Right ventricle myocardium inferior (tissue), 1 donor: ENCODE measurements at regions of chr16 and their contacts with region 1.

Region 1: DNA sequence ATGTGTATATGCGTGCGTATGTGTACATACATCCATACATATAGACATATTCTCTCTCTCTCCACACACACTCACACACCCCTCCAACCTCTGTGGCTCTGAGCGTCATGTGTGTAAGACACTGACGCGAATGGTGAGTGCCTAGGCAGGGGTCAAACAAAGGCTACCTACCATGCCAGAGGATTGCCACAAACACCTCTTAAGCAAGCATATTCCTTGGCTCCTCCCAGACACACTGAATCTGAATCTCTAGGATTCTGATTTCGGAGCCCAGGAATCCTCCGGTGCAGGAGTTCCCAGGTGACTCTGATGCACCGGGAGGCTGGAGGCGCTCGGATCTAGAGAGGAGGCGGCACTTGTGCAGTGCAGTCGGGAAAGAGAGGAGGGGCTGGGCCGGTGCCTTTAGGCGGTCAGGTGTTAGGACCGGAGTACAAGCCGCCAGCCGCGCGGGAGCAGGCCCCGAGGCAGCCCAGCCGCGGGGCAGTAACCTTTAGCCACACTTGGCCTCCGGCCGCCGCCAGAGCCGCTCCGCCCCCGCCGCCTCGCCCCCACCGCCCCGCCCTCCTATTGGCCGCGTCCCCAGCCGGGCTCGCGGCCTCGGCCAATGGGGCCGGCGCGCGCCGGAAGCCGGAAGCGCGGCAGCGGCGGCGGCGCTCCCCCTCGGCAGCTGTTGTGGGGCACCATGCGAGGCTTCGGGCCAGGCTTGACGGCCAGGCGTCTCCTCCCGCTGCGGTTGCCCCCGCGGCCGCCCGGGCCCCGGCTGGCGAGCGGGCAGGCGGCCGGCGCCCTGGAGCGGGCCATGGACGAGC is at the start of gene MLYCD:
- DNase-seq: peak; percentile 92
- ATAC-seq: peak; percentile 90
- total RNA-seq, gene MLYCD: 48.2 TPM

Region 2: DNA sequence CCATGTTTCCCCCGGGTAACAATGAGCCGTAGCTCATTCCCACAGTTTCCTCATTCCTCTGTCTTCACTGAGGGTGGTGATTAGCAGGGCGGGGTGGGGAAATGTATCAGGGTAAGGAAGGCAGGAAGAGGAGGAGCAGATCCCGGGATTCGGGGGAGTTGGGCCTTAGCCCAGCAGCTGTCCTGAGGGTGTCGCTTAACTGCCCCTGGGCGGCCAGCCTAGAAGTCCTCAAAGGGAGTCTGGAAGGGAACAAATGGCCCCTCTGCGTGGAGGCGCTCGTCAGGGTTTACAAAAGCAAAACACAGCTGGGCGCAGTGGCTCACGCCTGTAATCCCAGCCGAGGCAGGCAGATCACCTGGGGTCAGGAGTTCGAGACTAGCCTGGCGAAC is 14.6 kb after region 1 on chr16:
- intact Hi-C with region 1: loop called (anchors 2 kb)
- DNase-seq: peak; percentile 86
- ATAC-seq: peak; percentile 91

Region 3: DNA sequence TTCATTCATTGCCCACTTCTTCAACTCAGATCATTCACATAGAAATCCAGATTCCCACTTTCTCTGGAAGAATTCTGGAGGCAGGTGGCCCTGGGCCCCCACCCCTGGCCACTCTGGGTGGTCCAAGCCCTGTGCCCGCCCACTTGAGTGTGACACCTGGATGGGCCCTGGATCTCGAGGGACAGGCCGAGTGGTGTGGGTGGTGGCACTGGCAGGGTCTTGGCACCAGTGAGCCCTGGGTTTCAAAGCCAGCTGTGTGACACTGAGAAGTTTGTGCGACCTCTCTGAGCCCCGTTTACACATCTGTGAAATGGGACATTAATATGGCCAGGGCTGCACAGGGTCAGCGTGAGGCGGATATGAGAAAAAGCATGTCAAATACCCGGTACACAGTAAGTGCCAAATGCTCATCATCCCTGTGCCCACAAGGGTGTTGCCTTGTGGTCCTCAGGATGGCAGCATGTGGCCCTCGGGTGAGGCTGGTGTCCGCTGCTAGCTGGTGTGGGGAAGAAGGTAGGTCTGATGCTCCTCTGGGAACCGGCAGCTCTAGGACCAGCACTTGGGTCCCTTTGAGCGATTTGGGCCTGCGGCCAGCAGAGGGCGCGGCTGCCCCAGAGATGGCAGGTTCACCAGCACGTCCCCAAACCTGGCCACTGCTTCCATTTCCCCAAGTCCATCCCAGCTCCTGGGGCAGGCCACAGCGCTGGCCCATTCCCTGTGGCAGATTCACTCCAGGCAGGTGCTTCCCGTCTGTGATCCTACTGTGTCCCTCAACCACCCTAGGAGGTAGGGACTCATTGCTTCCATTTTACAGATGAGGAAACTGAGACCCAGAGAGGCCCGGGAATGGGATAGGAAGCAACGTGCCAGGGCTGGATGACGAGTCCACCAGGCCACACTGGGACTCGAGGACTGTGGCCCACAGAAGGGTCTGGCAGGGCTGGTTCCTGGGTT is 57.9 kb after region 1 on chr16:
- intact Hi-C with region 1: loop called (anchors 1 kb)
- DNase-seq: peak; percentile 90
- ATAC-seq: peak; percentile 18